ENCODE measurements at regions of chr21 and their contacts with region 1.

Region 1: DNA sequence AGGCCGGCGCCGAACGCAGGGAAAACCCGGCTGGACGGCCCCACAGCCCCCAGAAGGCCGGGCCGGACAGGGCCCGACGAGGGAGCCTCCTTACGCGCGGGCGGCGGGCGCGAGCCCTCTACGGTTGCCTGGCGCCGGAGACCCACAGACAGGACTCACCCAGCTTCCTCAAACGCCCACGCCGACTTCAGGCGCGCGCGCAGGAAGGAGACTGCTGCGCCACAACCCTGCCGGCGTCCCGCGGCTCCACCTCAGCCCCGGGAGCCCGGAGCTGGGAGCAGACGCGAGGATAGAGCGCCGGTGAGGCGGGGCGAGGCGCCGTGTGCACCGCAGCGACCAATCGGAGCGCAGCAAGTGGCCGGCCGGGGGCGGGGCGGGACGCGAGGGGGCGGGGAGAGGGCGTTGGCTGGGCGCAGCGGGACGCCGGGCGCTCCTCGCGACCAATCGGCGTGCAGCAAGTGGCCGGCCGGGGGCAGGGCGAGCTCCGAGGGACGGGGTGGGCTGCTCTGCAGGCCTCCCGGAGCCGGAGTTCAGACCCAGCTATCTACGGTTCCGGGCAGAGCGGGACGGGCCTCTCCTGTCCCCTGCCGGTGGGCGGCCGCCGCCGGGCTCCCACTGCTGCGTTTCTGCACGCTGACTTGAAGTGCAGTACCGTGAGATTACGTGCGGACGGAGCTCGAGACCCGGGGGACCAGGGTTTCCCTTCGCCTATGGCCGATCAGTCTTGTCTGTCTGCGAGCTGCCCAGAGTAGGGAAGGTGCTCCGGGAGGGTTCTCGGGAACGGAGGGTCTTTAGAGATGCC is at the start of gene TMEM50B:
- DNase-seq: peak; percentile 96 to 97 (median 96)
- H3K4me3 ChIP-seq: peak within 1 kb of the TSS; percentile 77 to 97 (median 88)
- H3K4me3 Mint-ChIP-seq: peak within 1 kb of the TSS; percentile 90 to 96
- H3K27ac ChIP-seq: peak within 1 kb of the TSS; percentile 77 to 94
- H3K27ac Mint-ChIP-seq: peak within 1 kb of the TSS; percentile 87 to 97 (median 93)
- H3K4me1 ChIP-seq: peaks cover 21 to 33% of the 10 kb centered on the region in 2 donors
- H3K4me1 Mint-ChIP-seq: peaks cover 24% of the 10 kb centered on the region
- H3K27me3 ChIP-seq: no peaks in the 10 kb centered on the region
- H3K27me3 Mint-ChIP-seq: peaks cover 0 to 1% (median 0%) of the 10 kb centered on the region in 3 donors
- CTCF ChIP-seq: peak; percentile 19
- polyA plus RNA-seq, gene TMEM50B: 33.8 to 43.0 (median 38.2) TPM

Region 2: DNA sequence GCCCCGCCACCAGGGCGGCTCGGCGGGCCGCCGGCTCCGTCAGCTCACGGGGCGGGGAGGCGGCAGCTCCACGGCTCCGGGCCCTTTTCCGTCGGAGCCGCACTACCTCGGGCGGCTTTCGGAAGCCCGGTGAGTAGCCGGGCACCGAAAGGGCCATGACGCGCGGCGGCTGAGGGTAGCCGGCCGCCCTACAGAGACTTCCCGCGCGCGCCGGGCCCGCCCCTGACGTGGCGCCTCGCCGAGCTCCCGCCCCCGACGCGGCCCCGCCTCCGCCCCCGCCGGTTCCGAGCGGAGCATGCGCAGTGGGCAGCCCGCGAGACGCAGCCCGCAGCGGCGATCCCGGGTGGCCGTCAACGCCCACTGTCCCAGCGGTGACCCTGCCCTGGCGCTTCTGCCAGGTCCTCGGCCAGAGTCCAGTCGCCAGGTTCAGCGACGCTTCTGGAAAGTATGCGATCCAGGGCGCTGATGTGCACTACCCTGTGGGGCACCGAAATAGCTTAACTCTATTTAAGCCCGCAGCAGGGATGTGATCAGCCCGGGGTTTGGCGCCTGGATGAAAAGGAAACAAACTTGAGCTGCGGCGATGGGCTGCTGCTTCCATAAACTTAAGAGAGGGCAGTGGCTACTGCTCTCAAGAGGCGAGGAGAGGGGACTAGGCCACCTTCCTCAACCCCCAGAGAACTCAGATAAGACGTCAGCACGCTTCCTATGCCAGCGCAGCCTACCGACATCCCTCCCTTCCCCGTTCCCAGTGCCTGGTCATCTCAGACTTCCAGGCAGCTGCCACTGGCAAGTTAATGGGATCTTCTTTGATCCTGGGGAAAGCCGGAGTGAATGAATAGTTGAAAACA is 108.8 kb after region 1 on chr21 and contains the start of gene DONSON:
- intact Hi-C with region 1: loop called (anchors 2 to 5 kb)
- DNase-seq: peak; percentile 83 to 87 (median 84)
- H3K4me3 ChIP-seq: peak within 1 kb of the TSS; percentile 78 to 85 (median 81)
- H3K4me3 Mint-ChIP-seq: peak within 1 kb of the TSS; percentile 92 to 98
- H3K27ac ChIP-seq: peak within 1 kb of the TSS; percentile 48 to 74
- H3K27ac Mint-ChIP-seq: peak within 1 kb of the TSS; percentile 83 to 92 (median 91)
- H3K4me1 ChIP-seq: peaks cover 10 to 16% of the 10 kb centered on the region in 2 donors
- H3K4me1 Mint-ChIP-seq: peaks cover 18% of the 10 kb centered on the region
- H3K27me3 ChIP-seq: no peaks in the 10 kb centered on the region
- H3K27me3 Mint-ChIP-seq: peaks cover 0 to 2% (median 0%) of the 10 kb centered on the region in 3 donors
- CTCF ChIP-seq: no peak
- polyA plus RNA-seq, gene DONSON: 0.94 to 8.6 (median 1.5) TPM